ENCODE measurements at regions of chr21 and their contacts with region 1.

Region 1: DNA sequence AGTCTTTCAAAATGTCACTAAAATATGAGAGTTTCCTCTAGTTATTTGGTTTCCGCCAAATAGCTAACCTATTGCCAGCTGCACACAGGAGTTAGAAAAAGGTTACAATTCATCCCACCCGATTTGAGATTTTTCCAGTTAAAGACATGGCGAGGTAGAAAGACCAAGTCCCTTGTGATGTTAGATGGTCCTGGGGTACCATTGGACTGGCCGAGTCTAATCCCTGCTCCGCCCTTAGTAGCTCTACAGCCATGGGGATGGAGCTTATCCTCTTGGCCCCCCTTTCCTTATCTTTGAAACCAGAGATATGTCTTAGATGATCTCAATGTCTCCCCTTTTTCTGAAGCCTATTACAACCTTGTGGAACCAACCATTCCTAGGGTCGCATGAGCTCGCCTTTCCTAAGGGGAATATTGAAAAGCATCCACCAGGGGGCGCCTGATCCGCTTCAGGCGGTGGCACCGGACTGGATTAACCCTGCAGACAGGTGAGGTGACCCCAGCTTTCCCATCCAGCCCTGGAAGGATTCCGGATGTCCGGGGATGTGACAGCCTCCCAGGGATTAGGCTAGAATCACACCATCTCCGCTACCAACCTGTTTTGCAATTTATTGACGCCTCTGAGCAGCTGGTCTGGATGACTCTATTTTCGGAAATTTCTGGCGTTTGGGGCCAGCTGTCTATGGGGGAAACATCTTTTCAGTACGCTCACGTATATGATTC is 68.3 kb upstream of the SIM2 start:
- H3K4me3 ChIP-seq: no peak overlapping the region
- H3K27ac ChIP-seq: no peak overlapping the region
- H3K4me1 ChIP-seq: no peaks in the 10 kb centered on the region
- CTCF ChIP-seq: peak; percentile 56

Region 2: GRCh38 chr21:36504067-36505058 is 126.3 kb before region 1 on chr21:
- CTCF ChIA-PET with region 1: interaction called, 36 read pairs
- POLR2A ChIA-PET with region 1: no interaction called
- H3K4me3 ChIP-seq: no peak overlapping the region
- H3K27ac ChIP-seq: no peak overlapping the region
- H3K4me1 ChIP-seq: peaks cover 32% of the 10 kb centered on the region
- CTCF ChIP-seq: peak; percentile 33

Region 3: DNA sequence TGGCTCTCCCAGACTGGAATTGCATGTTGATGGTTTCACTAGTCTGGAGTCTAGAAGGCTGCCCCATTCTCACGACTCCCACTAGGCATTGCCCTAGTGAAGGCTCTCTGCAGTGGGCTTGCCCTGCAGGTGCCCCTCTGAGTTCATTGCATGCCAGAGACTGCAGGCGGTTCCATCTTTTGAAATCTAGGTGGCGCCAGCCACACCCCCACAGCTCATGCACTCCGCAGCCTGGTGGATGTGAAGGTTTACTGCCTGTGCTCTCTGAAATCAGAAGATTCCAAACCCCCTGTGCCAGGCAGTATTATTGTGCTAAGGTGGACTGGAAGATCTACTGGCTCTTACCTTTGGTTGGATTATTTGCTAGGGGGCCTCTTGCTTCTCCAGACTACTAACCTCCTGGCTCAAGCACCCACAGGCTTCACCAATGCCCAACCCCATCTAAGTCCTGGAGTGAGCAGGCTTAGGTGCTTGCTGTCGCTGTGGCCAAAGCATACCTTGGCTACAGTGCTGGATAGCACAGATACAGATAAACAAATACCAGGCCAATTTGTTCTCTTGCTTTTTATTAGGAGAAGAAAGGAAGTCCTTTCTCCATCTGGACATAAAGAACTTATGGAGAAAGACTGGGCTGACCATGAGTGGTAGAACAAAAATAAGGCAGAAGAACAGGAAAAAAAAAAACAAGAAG is 15.2 kb before region 1 on chr21:
- CTCF ChIA-PET with region 1: interaction called, 29 read pairs
- POLR2A ChIA-PET with region 1: no interaction called
- H3K4me3 ChIP-seq: no peak overlapping the region
- H3K27ac ChIP-seq: no peak overlapping the region
- H3K4me1 ChIP-seq: no peaks in the 10 kb centered on the region
- CTCF ChIP-seq: no peak

Region 4: DNA sequence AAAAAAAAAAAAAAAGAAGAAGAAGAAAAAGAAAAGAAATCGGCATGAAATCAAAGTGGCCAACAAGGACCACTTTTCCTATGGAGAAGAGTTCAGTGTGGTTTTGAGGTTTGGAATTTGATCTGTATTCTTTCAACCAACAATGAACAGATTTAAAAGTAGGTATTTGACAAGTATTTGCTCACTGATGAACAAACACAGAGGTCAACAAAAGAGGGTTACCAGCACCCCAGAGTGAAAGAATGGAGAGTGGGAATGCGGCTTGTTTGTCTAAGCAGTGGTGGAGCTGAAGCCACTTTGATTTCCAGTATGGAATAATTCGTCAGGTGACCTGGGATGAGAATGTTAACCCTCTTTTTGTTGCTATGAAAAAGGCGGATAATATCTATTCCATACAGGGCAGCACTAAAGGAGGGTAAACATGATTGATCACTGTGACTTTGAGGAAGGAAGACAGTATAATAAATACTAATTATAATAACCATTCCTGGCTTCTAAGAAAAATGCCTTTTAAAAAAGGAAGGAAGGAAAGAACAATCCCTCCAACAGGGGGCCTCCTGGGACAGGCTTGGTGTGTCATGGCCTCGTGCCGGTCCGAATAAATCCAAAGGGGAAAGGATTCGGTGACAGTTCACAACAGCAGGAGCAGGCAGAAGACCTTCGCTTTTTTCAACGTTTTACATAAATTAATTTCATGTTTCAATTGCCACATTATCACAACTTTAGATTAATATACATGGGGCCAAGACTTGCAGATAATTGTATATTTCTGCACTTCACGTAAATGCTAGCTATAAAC is 31.1 kb after region 1 on chr21:
- CTCF ChIA-PET with region 1: interaction called, 31 read pairs
- POLR2A ChIA-PET with region 1: no interaction called
- H3K4me3 ChIP-seq: no peak overlapping the region
- H3K27ac ChIP-seq: no peak overlapping the region
- H3K4me1 ChIP-seq: no peaks in the 10 kb centered on the region
- CTCF ChIP-seq: peak; percentile 30; the same call in 1 of the 2 replicates

Region 5: DNA sequence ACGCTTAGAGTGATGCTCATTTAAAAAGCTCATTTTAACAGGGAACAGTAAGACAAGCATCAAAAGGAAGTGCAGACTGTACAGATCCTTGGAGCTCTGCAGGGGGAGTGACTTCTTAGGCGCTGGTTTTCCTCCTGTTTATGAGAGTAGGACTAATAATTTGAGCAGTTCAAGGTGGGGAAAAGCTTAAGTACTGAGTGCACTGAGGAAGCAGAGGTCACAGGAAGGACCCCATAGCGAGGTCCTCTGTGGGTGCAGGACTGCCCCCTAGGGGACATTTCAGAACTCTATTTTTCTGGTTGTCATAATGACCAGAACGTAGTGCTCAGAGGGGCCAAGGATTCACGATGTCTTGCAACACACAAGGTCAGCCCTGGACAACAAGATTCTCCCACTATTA is 223.7 kb after region 1 on chr21:
- CTCF ChIA-PET with region 1: interaction called, 64 read pairs
- POLR2A ChIA-PET with region 1: no interaction called
- H3K4me3 ChIP-seq: no peak overlapping the region
- H3K27ac ChIP-seq: no peak overlapping the region
- H3K4me1 ChIP-seq: no peaks in the 10 kb centered on the region; the same call in 1 of the 2 replicates
- CTCF ChIP-seq: no peak; the same call in none of the 2 replicates

Region 6: GRCh38 chr21:36927719-36928117 is 297.1 kb after region 1 on chr21:
- CTCF ChIA-PET with region 1: interaction called, 46 read pairs
- POLR2A ChIA-PET with region 1: no interaction called
- H3K4me3 ChIP-seq: no peak overlapping the region
- H3K27ac ChIP-seq: no peak overlapping the region
- H3K4me1 ChIP-seq: peaks cover 5% of the 10 kb centered on the region
- CTCF ChIP-seq: peak; percentile 82